H1 (cell line): ENCODE measurements at regions of chr19 and their contacts with region 1.

Region 1: GRCh38 chr19:49421039-49421877 is 2.0 kb downstream of the PTH2 start:
- DNase-seq: peak; percentile 79 to 99
- H3K4me3 ChIP-seq: peak overlapping the region in 1 of 4 experiments; percentile 9; a peak in 1 of 8 replicates
- H3K27ac ChIP-seq: no peak overlapping the region
- H3K4me1 ChIP-seq: peaks cover 7 to 28% (median 17%) of the 10 kb centered on the region in 4 experiments
- H3K27me3 ChIP-seq: peaks cover 23 to 51% (median 46%) of the 10 kb centered on the region in 4 experiments
- CTCF ChIP-seq: no peak
- EP300 ChIP-seq: no peak
- POLR2A ChIP-seq: no peak
- RAD21 ChIP-seq: no peak

Region 2: GRCh38 chr19:49272184-49272583 is 149.1 kb before region 1 on chr19:
- CTCF ChIA-PET with region 1: no interaction called
- POLR2A ChIA-PET with region 1: no interaction called
- DNase-seq: no peak
- H3K4me3 ChIP-seq: no peak overlapping the region
- H3K27ac ChIP-seq: no peak overlapping the region
- H3K4me1 ChIP-seq: no peaks in the 10 kb centered on the region
- H3K27me3 ChIP-seq: no peaks in the 10 kb centered on the region
- CTCF ChIP-seq: no peak
- EP300 ChIP-seq: no peak
- POLR2A ChIP-seq: no peak
- RAD21 ChIP-seq: no peak

Region 3: GRCh38 chr19:49403404-49404187 is 17.7 kb before region 1 on chr19:
- CTCF ChIA-PET with region 1: interaction called, 291 read pairs
- POLR2A ChIA-PET with region 1: interaction called, 38 read pairs
- DNase-seq: peak; percentile 49 to 77
- H3K4me3 ChIP-seq: peak overlapping the region in 3 of 4 experiments; percentile 12 to 23 (median 17); a peak in 2 of 8 replicates
- H3K27ac ChIP-seq: peak overlapping the region; percentile 69
- H3K4me1 ChIP-seq: peaks cover 5 to 28% (median 12%) of the 10 kb centered on the region in 4 experiments
- H3K27me3 ChIP-seq: no peaks in the 10 kb centered on the region
- CTCF ChIP-seq: no peak
- EP300 ChIP-seq: no peak; a peak in 1 of 3 replicates
- POLR2A ChIP-seq: peak in 1 of 2 experiments; percentile 71; a peak in 2 of 3 replicates
- RAD21 ChIP-seq: no peak; a peak in 1 of 4 replicates

Region 4: DNA sequence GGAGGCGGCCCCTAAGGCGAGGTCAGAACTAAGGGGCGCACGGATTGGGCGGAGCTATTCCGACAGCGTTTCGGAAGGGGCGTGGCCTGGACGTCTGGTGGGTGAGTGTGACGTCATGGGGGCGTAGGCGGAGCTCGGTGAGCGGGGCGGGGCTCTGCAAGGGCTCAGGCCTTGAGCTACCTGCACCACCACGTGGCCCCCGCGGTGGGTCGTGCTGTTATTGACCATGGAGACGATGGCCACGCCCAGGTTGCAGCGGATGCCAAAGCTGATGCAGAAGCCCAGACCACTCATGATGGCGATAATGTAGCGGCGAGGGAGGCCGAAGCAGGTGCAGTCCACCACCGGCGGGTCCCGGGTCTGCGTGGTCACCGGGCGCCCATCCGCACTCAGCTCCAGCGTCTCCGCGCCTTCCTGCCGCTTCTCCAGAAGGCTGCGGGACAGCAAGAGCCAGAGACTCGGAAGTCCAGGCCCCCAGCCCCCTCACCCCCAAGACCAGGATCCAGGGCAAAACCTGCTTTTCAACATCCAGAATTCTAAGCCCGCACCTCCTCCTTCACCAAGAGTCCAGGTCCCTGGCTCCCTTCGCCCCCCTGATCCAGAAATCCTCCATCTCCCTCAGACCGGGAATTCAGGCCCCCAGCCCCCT is 15.2 kb after region 1 on chr19:
- CTCF ChIA-PET with region 1: interaction called, 38 read pairs
- POLR2A ChIA-PET with region 1: interaction called, 17 read pairs
- DNase-seq: peak; percentile 89 to 100
- H3K4me3 ChIP-seq: peak overlapping the region; percentile 26 to 55 (median 35); a peak in 7 of 8 replicates
- H3K27ac ChIP-seq: no peak overlapping the region
- H3K4me1 ChIP-seq: peaks cover 0 to 16% (median 12%) of the 10 kb centered on the region in 4 experiments; a peak in 5 of 7 replicates
- H3K27me3 ChIP-seq: peaks cover 30 to 72% (median 62%) of the 10 kb centered on the region in 4 experiments
- CTCF ChIP-seq: no peak
- EP300 ChIP-seq: no peak
- POLR2A ChIP-seq: no peak; a peak in 1 of 3 replicates
- RAD21 ChIP-seq: no peak

Region 5: DNA sequence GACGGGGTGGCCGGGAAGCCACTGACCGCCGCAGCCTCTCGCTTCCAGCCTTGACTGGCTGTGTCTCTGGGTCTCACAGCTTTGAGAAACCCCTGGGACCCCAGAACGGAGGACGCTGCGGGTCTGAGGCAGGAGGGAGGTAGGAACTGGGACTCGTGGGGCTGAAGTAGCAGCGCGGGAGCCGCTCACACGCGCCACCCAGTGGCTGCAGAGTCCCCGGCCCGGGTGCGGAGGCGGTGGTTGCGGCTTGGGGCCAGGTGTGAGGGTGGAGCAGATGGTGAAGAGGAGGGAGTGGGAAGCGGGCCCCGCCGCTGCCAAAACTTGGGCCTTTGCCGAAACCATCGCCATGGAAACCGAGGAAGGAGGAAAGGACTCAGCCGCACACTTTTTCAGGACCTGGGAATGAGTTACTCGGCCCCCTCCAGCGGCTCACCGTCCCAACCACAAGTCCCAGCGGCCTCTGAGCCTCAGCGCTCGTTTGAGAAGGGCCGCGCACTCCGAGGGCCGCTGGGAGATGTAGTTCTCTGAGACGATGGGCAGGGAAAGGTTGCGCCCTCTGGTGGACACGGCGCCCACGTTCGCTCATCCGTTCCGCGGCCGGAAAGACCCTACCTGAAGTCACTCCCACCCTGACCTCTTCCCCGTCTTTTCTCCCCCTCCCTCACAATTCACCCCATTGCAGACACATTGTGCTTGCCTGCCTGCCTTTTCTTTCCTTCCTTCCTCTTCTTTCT is 22.3 kb after region 1 on chr19:
- CTCF ChIA-PET with region 1: interaction called, 23 read pairs
- POLR2A ChIA-PET with region 1: interaction called, 8 read pairs
- DNase-seq: peak; percentile 91 to 98
- H3K4me3 ChIP-seq: peak overlapping the region; percentile 38 to 69 (median 62)
- H3K27ac ChIP-seq: peak overlapping the region; percentile 53
- H3K4me1 ChIP-seq: peaks cover 0 to 14% (median 12%) of the 10 kb centered on the region in 4 experiments; a peak in 6 of 7 replicates
- H3K27me3 ChIP-seq: peaks cover 18 to 26% (median 25%) of the 10 kb centered on the region in 4 experiments
- CTCF ChIP-seq: peak; percentile 87 to 98 (median 89)
- EP300 ChIP-seq: no peak
- POLR2A ChIP-seq: no peak; a peak in 2 of 3 replicates
- RAD21 ChIP-seq: peak; percentile 72 to 76